Panc1 (cell line): ENCODE measurements at regions of chr9 and their contacts with region 1.

Region 1: GRCh38 chr9:131310833-131311554 is 21.5 kb downstream of the PLPP7 start:
- DNase-seq: no peak
- ATAC-seq: peak; percentile 43; the same call in 1 of the 2 replicates
- H3K4me3 ChIP-seq: no peak overlapping the region
- H3K27ac ChIP-seq: no peak overlapping the region
- H3K4me1 ChIP-seq: no peaks in the 10 kb centered on the region
- H3K27me3 ChIP-seq: no peaks in the 10 kb centered on the region
- CTCF ChIP-seq: no peak

Region 2: DNA sequence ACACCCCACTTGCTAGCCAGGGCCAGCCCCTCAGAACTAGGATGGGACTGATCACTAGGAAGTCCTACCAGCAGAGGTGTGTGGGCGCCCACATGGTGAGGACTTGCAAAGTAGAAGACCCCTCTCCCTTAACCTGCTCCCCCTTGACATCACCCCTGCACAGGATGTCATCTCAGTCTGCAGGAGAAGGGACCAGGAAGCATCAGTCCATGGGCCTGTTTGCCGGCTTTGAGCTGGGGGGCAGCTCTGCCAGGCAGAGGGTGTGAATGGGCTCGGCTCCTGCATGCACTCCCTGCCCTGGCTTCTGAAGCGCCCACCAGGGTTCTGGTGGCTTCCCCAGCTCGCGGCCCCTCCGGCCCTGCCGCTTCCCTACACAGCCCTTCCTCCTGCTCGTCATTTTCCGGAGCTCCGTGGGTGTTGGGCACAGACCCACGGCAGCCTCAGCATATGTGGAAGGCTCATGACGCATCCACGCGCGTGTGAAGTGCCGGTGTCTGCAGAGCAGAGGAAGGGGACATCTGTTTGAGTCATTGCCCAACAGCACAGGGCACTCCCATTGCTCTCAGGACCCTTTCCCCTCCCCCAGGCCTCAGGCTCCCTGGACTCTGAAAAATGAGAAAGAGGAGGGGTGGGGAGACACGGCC is 30.9 kb before region 1 on chr9:
- CTCF ChIA-PET with region 1: interaction called, 11 read pairs
- POLR2A ChIA-PET with region 1: no interaction called
- in situ Hi-C with region 1: no loop called
- intact Hi-C with region 1: no loop called
- DNase-seq: no peak
- ATAC-seq: no peak
- H3K4me3 ChIP-seq: no peak overlapping the region
- H3K27ac ChIP-seq: no peak overlapping the region
- H3K4me1 ChIP-seq: no peaks in the 10 kb centered on the region
- H3K27me3 ChIP-seq: peaks cover 2% of the 10 kb centered on the region; the same call in 1 of the 2 replicates
- CTCF ChIP-seq: no peak